Lower leg skin (tissue), 4 donors: ENCODE measurements at regions of chr19 and their contacts with region 1.

Region 1: GRCh38 chr19:2750808-2751443 is 11.1 kb upstream of the SLC39A3 start:
- DNase-seq: no peak
- H3K4me3 ChIP-seq: no peak overlapping the region
- CTCF ChIP-seq: no peak
- POLR2A ChIP-seq: no peak

Region 2: DNA sequence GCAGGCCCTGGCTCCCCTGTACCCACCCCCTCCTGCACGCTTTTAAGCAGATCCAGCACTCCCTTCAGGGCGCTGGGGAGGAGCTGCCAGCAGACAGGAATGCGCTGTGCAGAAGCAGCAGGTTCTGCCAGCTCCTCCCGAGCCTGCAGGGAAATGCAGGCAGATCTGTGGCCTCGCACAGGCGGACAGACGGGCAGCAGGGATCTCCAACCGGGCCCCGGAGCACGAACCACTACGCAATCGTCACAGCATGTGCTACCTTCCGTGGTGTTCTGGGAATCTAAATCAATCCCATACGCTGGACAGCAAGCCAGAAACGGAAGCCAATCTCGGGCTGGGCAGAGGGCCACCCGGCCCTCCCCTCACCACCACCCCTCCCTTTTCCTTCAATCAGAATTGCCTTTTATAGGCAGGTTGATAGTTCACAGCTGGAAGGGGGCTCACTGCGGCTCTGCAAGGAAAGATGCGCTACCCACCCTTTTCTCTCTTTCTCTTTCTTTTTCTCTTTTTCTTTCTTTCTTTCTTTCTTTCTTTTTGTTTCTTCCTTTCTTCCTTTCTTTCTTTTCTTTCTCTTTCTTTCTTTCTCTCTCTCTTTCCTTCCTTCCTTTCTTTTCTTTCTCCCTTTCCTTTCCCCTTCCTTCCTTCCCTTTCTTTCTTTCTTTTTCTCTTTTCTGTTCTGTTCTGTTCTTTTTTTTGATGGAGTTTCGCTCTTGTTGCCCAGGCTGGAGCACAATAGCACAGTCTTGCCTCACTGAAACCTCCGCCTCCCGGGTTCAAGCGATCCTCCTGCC is 148.3 kb before region 1 on chr19:
- intact Hi-C with region 1: no loop called
- DNase-seq: peak; percentile 85 to 97
- H3K4me3 ChIP-seq: no peak overlapping the region
- CTCF ChIP-seq: no peak
- POLR2A ChIP-seq: no peak

Region 3: DNA sequence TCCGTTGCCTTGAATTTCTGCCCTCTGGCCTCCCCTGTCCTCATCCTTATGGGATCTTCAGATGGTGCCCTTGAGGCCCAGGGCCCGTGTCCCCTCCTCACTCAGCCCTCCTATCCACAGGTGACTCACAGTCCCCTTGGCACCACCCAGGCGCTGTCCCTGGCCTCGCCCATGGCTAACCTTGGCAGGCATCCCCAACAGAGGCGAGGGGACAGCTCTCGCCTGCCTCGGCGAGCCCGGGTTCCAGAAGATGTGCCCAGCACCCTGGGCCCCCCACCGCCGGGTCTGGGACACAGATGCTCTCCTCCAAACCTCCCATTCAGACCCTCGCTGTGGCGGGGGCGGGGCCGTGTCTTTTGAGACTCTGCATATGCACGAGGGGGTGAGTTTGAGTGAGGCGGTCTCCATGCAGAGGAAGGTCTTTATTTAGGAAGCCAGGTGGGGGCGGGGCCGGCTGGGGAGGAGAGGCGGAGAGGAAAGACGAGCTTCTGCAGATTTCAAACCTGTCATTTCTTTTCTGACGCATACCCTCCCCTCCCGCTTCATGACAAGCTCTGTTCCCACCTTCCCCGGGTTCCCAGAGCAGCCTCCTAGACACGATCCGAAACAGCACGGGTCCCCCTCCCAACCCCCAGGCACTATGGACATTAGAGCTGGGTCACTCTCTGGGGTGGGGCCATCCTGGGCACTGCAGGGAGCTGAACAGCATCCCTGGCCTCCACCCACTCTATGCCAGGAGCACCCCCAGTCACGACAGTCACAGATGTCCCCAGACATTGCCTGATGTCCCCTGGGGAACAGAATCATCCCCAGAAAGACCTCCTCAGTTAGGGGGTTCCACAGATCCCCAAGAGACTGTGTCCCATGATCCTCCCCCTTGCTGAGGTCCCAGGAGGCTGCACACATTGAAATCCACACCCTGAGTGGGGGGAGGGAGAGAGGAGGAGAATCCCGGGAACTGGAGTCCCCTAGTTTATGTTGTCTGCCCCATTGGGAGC is 96.9 kb before region 1 on chr19:
- intact Hi-C with region 1: loop called (anchors 5 kb)
- DNase-seq: no peak
- H3K4me3 ChIP-seq: no peak overlapping the region
- CTCF ChIP-seq: no peak
- POLR2A ChIP-seq: no peak

Region 4: DNA sequence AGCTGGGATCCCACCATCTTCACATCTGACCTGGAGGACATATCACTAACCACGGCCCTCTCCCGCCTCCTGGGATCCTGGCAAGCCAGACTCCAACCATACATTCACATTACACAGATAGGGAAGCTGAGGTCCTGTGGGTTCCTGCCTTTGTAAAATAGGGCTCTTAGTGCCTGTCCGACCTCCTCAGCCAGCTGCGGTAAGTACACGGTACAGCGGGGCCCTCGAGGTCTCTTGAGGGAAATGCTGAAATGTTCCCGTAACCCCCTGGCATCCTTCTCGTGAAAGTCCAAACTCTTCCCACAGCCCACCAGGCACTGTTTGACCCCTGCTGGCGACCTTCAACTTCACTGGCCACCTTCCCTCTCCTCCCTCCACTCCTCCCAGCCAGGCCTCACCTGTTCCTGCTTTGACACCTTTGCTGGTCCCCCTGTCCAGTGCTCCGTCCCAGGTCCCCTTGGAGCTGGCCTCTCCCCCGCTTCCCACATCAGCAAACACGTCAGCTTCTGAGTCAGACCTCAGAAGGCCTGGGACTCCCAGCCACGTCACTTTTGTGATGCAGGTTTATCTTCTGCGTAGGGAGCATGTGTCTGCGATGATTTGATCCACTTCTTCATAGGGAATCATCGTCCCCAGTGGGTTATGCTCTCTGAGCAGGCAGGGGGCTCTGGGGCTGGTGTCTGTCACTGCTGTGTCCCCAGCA is 39.6 kb before region 1 on chr19:
- intact Hi-C with region 1: loop called (anchors 5 kb)
- DNase-seq: no peak
- H3K4me3 ChIP-seq: no peak overlapping the region
- CTCF ChIP-seq: no peak
- POLR2A ChIP-seq: no peak